Brain microvascular endothelial cell (primary cell): ENCODE measurements at regions of chr5 and their contacts with region 1.

Region 1: GRCh38 chr5:136192526-136193321 is at the start of gene SMIM32:
- DNase-seq: no peak
- H3K4me3 ChIP-seq: peak within 1 kb of the TSS; percentile 37
- H3K27ac ChIP-seq: no peak within 1 kb of the TSS
- H3K27me3 ChIP-seq: peaks cover 33% of the 10 kb centered on the region
- CTCF ChIP-seq: no peak

Region 2: DNA sequence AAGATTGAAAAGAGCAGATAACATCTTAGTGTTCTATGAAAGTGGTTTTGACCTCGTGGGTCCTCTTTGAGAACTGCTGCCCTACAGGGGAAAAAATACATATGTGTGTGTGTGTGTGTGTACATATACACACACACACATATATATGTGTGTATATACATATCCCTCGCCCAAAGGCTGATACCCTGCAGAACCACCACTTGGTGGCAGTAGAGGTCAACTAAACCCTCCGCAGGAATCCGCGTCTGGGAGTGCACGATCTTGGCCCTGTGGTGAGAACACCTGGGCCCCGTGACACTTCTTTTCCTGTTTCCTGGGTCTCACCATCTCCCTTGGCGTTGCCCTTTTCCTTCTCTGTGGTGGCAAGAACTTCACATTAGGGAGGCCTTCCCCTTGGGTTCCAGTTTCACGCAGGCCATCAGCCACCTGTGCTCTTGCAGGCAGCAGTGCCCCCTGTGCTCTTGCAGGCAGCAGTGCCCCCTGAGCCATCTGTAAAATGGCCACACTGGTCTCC is 305.3 kb before region 1 on chr5:
- in situ Hi-C with region 1: loop called (anchors 25 kb)
- DNase-seq: peak; percentile 53
- H3K4me3 ChIP-seq: no peak overlapping the region
- H3K27ac ChIP-seq: no peak overlapping the region
- H3K27me3 ChIP-seq: no peaks in the 10 kb centered on the region
- CTCF ChIP-seq: peak; percentile 87

Region 3: DNA sequence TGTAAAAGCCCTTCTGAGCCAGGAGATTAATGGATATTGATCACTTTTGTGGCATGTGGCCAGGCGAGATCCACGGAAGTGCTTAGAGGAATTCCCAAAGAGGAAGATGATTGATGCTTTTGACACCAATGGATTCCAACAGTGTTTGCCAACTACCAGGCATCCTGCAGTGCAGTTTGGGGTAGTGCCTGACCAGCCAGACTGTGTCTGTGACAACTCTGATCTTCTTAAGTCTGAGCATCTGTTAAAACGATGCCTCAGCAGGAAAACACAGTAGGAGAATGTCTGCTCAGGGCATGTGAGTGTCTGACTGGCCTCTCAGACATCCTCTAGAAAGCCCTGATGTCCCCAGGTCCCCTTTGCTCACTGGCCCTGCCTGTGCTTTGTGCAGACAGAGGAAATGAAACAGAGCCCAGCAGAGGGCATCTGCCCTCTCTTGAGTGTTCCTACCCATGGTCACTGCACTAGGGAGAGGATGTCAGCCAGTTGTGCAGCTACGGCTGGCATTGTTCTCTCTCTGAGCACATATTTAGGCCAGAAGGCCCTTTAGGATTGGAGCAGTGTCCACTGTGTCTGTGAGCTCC is 115.6 kb after region 1 on chr5:
- in situ Hi-C with region 1: no loop called
- DNase-seq: no peak
- H3K4me3 ChIP-seq: no peak overlapping the region
- H3K27ac ChIP-seq: no peak overlapping the region
- H3K27me3 ChIP-seq: no peaks in the 10 kb centered on the region
- CTCF ChIP-seq: peak; percentile 22

Region 4: GRCh38 chr5:136350343-136350742 is 157.6 kb after region 1 on chr5:
- in situ Hi-C with region 1: no loop called
- DNase-seq: no peak
- H3K4me3 ChIP-seq: no peak overlapping the region
- H3K27ac ChIP-seq: no peak overlapping the region
- H3K27me3 ChIP-seq: no peaks in the 10 kb centered on the region
- CTCF ChIP-seq: no peak

Region 5: DNA sequence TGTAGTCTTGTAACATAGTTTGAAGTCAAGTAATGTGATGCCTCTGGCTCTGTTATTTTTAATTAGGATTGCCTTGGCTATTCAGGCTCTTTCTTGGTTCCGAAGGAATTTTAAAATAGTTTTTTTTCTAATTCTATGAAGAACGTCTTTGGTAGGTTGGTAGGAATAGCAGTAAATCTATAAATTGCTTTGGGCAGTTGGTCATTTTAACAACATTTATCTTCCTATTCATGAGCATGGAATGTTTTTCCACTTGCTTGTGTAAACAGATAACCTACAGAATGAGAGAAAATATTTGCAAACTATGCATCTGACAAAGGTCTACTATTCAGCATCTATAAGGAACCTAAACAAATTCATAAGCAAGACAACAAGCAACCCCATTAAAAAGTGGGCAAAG is 345.8 kb after region 1 on chr5:
- in situ Hi-C with region 1: no loop called
- DNase-seq: no peak
- H3K4me3 ChIP-seq: no peak overlapping the region
- H3K27ac ChIP-seq: no peak overlapping the region
- H3K27me3 ChIP-seq: no peaks in the 10 kb centered on the region
- CTCF ChIP-seq: no peak